Activated naive CD4-positive, alpha-beta T cell treated with anti-CD3 and anti-CD28 coated beads for 36 hours (primary cell): ENCODE measurements at regions of chr7 and their contacts with region 1.

Region 1: GRCh38 chr7:16071246-16071857 is 350.0 kb downstream of the CRPPA start:
- DNase-seq: no peak
- H3K4me3 Mint-ChIP-seq: no peak overlapping the region
- H3K27ac Mint-ChIP-seq: no peak overlapping the region
- H3K4me1 Mint-ChIP-seq: no peaks in the 10 kb centered on the region
- H3K27me3 Mint-ChIP-seq: no peaks in the 10 kb centered on the region

Region 2: GRCh38 chr7:14698239-14698638 is 1373.1 kb before region 1 on chr7:
- CTCF ChIA-PET with region 1: no interaction called
- intact Hi-C with region 1: loop called (anchors 5 kb)
- DNase-seq: no peak
- H3K4me3 Mint-ChIP-seq: no peak overlapping the region
- H3K27ac Mint-ChIP-seq: no peak overlapping the region
- H3K4me1 Mint-ChIP-seq: no peaks in the 10 kb centered on the region
- H3K27me3 Mint-ChIP-seq: no peaks in the 10 kb centered on the region

Region 3: GRCh38 chr7:15015545-15016326 is 1055.6 kb before region 1 on chr7:
- CTCF ChIA-PET with region 1: no interaction called
- intact Hi-C with region 1: loop called (anchors 10 kb)
- DNase-seq: peak; percentile 6
- H3K4me3 Mint-ChIP-seq: no peak overlapping the region
- H3K27ac Mint-ChIP-seq: no peak overlapping the region
- H3K4me1 Mint-ChIP-seq: no peaks in the 10 kb centered on the region
- H3K27me3 Mint-ChIP-seq: no peaks in the 10 kb centered on the region

Region 4: GRCh38 chr7:15305002-15305600 is 766.3 kb before region 1 on chr7:
- CTCF ChIA-PET with region 1: interaction called, 3 read pairs
- intact Hi-C with region 1: loop called (anchors 1 kb)
- DNase-seq: peak; percentile 13
- H3K4me3 Mint-ChIP-seq: no peak overlapping the region
- H3K27ac Mint-ChIP-seq: no peak overlapping the region
- H3K4me1 Mint-ChIP-seq: no peaks in the 10 kb centered on the region
- H3K27me3 Mint-ChIP-seq: no peaks in the 10 kb centered on the region

Region 5: DNA sequence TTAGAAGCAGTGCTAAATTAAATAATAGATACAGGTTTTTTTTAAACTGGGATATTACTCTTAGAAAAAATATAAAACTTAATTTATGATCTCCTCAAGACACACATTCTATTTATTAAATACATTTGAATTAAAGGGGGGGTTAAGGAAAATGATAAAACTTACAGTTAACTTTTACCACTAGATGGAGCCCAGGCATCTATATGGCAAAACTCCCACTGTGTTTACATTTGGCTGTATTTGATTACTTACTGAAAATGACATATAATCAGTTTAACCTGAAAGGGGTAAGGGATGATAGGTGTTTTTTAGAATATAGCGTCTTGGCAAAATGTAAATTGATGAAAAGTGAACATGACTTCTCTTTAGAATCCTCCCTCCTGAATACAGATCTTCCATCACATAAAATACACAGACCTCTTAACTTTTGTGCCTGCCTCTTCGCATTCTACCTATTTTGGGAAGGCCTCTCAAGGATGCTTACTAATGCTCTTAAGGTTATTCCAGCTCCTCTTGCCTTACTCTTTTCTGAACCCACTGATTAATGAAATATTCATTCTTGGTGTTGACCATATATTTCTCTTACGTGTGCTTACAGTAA is 745.2 kb before region 1 on chr7:
- CTCF ChIA-PET with region 1: no interaction called
- intact Hi-C with region 1: loop called (anchors 1 kb)
- DNase-seq: no peak
- H3K4me3 Mint-ChIP-seq: no peak overlapping the region
- H3K27ac Mint-ChIP-seq: no peak overlapping the region
- H3K4me1 Mint-ChIP-seq: no peaks in the 10 kb centered on the region
- H3K27me3 Mint-ChIP-seq: no peaks in the 10 kb centered on the region